HepG2 (cell line): ENCODE measurements at regions of chr3 and their contacts with region 1.

Region 1: DNA sequence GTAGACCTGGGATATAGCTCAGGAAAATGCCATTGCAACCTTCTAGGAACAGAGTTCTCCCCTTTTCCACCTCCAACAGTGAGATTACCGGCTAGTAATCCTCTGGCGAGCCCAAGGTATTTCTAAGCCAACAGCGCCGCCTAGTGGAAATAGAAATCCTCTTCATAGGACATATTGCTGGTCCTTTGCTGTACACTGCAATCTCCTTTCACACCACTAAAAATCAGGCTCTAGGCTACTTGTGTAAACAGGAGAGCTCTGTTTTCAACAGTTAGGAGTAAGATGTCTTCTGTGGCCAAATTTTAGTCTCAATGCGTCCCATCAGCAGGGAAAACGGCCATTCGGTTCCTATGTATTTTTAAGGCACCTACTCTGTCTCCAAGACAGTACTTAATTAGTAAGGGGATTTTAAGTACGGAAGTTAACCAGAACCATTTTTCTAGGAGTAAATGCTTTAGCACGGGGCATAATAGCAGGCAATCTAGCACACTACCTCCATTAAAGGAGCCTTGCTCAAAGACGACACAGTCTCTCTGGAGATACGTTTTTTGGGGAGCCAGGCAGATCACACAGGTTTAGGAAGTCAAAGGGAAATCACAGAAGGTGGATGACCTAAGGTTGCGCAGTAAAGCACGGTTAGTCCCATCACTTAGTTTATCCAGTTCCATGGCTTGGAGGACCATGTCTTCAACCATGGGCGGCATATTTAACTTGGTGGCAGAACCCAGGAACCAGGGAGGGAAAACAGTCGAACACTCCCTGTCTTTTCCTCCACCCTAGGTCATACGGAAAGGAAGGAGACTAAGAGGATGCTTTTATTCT is 43.8 kb downstream of the NCEH1 start:
- DNase-seq: peak; percentile 82
- ATAC-seq: peak; percentile 100
- H3K4me3 ChIP-seq: no peak overlapping the region
- H3K27ac ChIP-seq: no peak overlapping the region
- H3K4me1 ChIP-seq: peaks cover 10% of the 10 kb centered on the region
- H3K27me3 ChIP-seq: no peaks in the 10 kb centered on the region
- CTCF ChIP-seq: peak; percentile 91
- EP300 ChIP-seq: no peak
- POLR2A ChIP-seq: no peak
- RAD21 ChIP-seq: peak; percentile 92

Region 2: GRCh38 chr3:171980578-171981270 is 686.4 kb before region 1 on chr3:
- CTCF ChIA-PET with region 1: no interaction called
- POLR2A ChIA-PET with region 1: no interaction called
- in situ Hi-C with region 1: no loop called
- intact Hi-C with region 1: no loop called
- DNase-seq: no peak
- ATAC-seq: no peak
- H3K4me3 ChIP-seq: no peak overlapping the region
- H3K27ac ChIP-seq: no peak overlapping the region
- H3K4me1 ChIP-seq: peaks cover 15% of the 10 kb centered on the region
- H3K27me3 ChIP-seq: no peaks in the 10 kb centered on the region
- CTCF ChIP-seq: no peak
- EP300 ChIP-seq: no peak
- POLR2A ChIP-seq: no peak
- RAD21 ChIP-seq: no peak

Region 3: DNA sequence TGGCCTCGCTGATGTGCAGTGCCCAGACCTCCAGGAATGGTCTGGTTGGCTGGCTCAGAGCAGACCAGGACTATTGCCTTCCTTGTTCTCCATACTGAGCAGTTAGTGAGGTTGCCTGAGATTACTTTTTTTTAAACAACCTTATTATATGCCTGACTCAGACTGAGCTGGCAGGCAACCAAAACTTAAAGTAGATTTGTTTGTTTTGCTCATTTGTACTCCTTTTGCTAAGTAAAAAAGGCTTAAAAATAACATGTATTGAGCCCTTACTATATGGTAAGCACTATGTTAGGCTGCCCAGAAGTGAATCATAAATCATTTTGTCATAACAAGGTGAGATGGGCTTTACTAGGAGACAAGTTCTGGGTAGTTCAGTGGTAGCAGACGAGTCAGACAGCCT is 311.2 kb before region 1 on chr3:
- CTCF ChIA-PET with region 1: no interaction called
- POLR2A ChIA-PET with region 1: no interaction called
- in situ Hi-C with region 1: no loop called
- intact Hi-C with region 1: loop called (anchors 10 kb)
- DNase-seq: no peak
- ATAC-seq: peak; percentile 25
- H3K4me3 ChIP-seq: no peak overlapping the region
- H3K27ac ChIP-seq: no peak overlapping the region
- H3K4me1 ChIP-seq: no peaks in the 10 kb centered on the region
- H3K27me3 ChIP-seq: no peaks in the 10 kb centered on the region
- CTCF ChIP-seq: no peak
- EP300 ChIP-seq: no peak
- POLR2A ChIP-seq: no peak
- RAD21 ChIP-seq: no peak

Region 4: DNA sequence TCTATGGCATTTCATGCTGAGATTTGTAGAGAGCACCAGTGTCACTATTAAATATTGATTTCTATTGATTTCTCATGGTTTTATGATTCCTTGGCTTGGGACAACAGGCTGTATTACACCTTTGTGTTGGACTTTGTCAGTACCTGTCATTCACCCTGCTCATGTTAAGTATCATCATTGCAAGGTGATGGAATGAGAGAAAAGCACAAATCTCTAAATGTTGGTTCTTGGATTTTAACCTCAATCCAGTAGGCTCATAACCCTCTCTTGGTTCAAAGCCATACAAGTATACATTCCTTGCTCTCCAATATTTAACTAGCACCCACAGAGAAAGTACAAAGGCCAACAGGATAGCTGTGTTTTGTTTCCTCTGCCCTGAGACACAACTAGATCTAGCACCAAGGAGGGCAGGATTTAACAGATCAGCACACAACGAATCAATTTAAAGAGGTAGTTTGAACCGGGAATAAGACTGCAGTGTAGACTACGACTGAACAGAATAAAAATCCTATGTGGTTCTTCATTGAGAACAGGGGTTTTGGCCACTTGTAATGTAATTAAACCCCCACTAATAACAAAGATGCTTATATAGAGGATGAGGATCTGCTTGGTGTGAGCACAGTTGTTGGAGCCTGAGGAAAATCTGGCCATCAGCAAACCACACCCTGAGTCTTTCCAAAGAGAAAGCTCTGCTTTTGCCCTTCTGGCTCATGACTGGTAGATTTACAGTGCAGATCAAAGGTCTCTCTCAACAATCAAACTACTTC is 65.8 kb before region 1 on chr3:
- CTCF ChIA-PET with region 1: no interaction called
- POLR2A ChIA-PET with region 1: no interaction called
- in situ Hi-C with region 1: no loop called
- intact Hi-C with region 1: loop called (anchors 2 kb)
- DNase-seq: peak; percentile 87
- ATAC-seq: peak; percentile 99
- H3K4me3 ChIP-seq: peak overlapping the region; percentile 24 to 55 (median 40); a peak in 4 of 6 replicates
- H3K27ac ChIP-seq: peak overlapping the region; percentile 86
- H3K4me1 ChIP-seq: peaks cover 38% of the 10 kb centered on the region
- H3K27me3 ChIP-seq: no peaks in the 10 kb centered on the region
- CTCF ChIP-seq: no peak
- EP300 ChIP-seq: peak in 1 of 2 experiments; percentile 76; a peak in 2 of 4 replicates
- POLR2A ChIP-seq: peak in 1 of 2 experiments; percentile 32; a peak in 1 of 4 replicates
- RAD21 ChIP-seq: no peak

Region 5: GRCh38 chr3:172622916-172623700 is 44.0 kb before region 1 on chr3:
- CTCF ChIA-PET with region 1: interaction called, 7 read pairs
- POLR2A ChIA-PET with region 1: no interaction called
- in situ Hi-C with region 1: no loop called
- intact Hi-C with region 1: loop called (anchors 2 kb)
- DNase-seq: no peak
- ATAC-seq: peak; percentile 73
- H3K4me3 ChIP-seq: no peak overlapping the region
- H3K27ac ChIP-seq: no peak overlapping the region
- H3K4me1 ChIP-seq: peaks cover 37% of the 10 kb centered on the region
- H3K27me3 ChIP-seq: no peaks in the 10 kb centered on the region
- CTCF ChIP-seq: peak; percentile 56
- EP300 ChIP-seq: no peak
- POLR2A ChIP-seq: no peak
- RAD21 ChIP-seq: no peak